Activated CD4-positive, alpha-beta T cell treated with anti-CD3 and anti-CD28 coated beads for 36 hours (primary cell): ENCODE measurements at regions of chr19 and their contacts with region 1.

Region 1: DNA sequence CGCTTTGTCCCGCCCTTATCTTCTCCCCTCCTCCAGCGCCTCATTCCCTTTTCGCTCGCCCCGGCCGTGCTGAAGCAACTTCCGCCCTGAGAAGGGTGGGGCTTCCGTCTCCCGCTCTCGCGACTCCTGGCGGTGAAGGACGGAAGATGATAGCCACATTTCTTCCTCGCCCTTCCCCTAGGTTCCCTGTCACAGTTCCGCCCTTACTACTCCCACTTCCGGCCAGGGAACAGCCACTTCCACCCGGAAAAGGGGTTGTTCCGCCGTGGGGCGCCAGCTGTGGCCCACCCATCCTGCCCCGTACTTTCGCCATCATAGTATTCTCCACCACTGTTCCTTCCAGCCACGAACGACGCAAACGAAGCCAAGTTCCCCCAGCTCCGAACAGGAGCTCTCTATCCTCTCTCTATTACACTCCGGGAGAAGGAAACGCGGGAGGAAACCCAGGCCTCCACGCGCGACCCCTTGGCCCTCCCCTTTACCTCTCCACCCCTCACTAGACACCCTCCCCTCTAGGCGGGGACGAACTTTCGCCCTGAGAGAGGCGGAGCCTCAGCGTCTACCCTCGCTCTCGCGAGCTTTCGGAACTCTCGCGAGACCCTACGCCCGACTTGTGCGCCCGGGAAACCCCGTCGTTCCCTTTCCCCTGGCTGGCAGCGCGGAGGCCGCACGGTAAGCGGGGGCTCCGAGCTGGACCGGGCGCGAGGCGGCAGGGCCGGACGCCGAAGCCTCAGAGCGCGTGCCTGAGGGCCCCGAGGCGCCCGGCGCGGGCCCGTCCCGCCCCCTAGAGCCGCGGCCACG is at the start of gene RPS19:
- DNase-seq: peak; percentile 99
- ATAC-seq: peak; percentile 89
- H3K4me3 Mint-ChIP-seq: peak within 1 kb of the TSS; percentile 86
- H3K27ac Mint-ChIP-seq: peak within 1 kb of the TSS; percentile 98
- H3K4me1 Mint-ChIP-seq: peaks cover 46% of the 10 kb centered on the region
- H3K27me3 Mint-ChIP-seq: no peaks in the 10 kb centered on the region
- total RNA-seq, gene RPS19: 2,342 to 3,204 TPM

Region 2: GRCh38 chr19:40798223-40798996 is 1061.4 kb before region 1 on chr19:
- CTCF ChIA-PET with region 1: no interaction called
- POLR2A ChIA-PET with region 1: no interaction called
- intact Hi-C with region 1: loop called in 1 of 2 experiments (anchors 5 kb)
- DNase-seq: peak; percentile 100
- ATAC-seq: peak; percentile 82
- H3K4me3 Mint-ChIP-seq: peak overlapping the region; percentile 91
- H3K27ac Mint-ChIP-seq: peak overlapping the region; percentile 97
- H3K4me1 Mint-ChIP-seq: peaks cover 49% of the 10 kb centered on the region
- H3K27me3 Mint-ChIP-seq: no peaks in the 10 kb centered on the region

Region 3: GRCh38 chr19:41397086-41398049 is 462.4 kb before region 1 on chr19 and contains the starts of genes BCKDHA and EXOSC5:
- CTCF ChIA-PET with region 1: no interaction called
- POLR2A ChIA-PET with region 1: no interaction called
- intact Hi-C with region 1: loop called in 1 of 2 experiments (anchors 1 kb)
- DNase-seq: peak; percentile 99
- ATAC-seq: peak; percentile 100
- H3K4me3 Mint-ChIP-seq: peak within 1 kb of the TSS; percentile 97
- H3K27ac Mint-ChIP-seq: peak within 1 kb of the TSS; percentile 97
- H3K4me1 Mint-ChIP-seq: peaks cover 31% of the 10 kb centered on the region
- H3K27me3 Mint-ChIP-seq: no peaks in the 10 kb centered on the region
- total RNA-seq, gene BCKDHA: 14.5 to 25.4 TPM
- total RNA-seq, gene EXOSC5: 32.7 to 47.8 TPM

Region 4: GRCh38 chr19:41811036-41811435 is 48.8 kb before region 1 on chr19:
- CTCF ChIA-PET with region 1: no interaction called
- POLR2A ChIA-PET with region 1: no interaction called
- intact Hi-C with region 1: no loop called
- DNase-seq: no peak
- ATAC-seq: no peak
- H3K4me3 Mint-ChIP-seq: no peak overlapping the region
- H3K27ac Mint-ChIP-seq: no peak overlapping the region
- H3K4me1 Mint-ChIP-seq: no peaks in the 10 kb centered on the region
- H3K27me3 Mint-ChIP-seq: peaks cover 6% of the 10 kb centered on the region

Region 5: DNA sequence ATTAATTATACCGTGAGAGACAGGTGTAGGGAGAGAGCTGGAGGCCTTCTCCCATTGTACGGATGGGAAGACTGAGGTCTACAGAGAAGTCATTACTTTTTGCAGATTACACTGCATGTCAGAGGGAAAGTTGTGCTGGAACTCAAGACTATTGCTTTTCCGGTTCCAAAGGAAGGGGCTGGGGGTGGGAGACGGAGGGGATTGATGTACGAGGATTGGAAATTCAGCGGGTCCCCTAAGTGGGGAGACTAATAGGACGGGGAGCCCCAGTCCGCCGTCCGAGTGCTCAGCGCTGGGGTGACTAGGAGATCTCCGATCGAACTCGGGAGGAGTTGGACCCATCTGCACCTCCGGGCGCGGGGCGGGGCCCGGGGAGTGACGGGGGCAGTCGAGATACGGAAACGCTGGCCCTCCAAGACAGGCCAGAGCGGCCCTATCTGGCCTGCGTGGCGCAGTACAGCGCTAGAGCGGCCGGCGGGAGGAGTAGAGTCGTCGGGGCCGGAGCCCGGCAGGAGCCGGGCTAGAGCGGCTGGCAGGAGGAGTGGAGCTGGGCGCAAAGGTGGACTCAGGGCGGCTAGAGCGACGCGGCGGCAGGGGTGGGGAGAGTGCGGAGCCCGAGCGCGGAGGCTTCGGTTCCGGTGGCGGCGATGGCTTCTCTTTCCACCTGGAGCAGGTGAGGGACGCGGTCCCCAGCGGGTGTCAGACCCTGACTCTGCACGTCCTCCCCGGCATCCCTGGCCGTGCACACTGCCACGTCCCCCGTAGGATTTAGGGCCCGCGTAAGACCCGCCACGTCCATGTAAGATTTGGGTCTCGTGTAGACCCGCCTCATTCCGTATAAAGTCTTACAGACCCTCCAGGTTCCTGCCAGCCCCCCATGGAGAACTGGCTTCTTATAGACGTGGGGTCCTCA is 24.3 kb after region 1 on chr19:
- CTCF ChIA-PET with region 1: interaction called, 6 read pairs
- POLR2A ChIA-PET with region 1: interaction called, 17 read pairs
- intact Hi-C with region 1: loop called (anchors 1 to 2 kb)
- DNase-seq: peak; percentile 94
- ATAC-seq: peak; percentile 75
- H3K4me3 Mint-ChIP-seq: peak overlapping the region; percentile 68
- H3K27ac Mint-ChIP-seq: peak overlapping the region; percentile 96
- H3K4me1 Mint-ChIP-seq: peaks cover 54% of the 10 kb centered on the region
- H3K27me3 Mint-ChIP-seq: no peaks in the 10 kb centered on the region

Region 6: DNA sequence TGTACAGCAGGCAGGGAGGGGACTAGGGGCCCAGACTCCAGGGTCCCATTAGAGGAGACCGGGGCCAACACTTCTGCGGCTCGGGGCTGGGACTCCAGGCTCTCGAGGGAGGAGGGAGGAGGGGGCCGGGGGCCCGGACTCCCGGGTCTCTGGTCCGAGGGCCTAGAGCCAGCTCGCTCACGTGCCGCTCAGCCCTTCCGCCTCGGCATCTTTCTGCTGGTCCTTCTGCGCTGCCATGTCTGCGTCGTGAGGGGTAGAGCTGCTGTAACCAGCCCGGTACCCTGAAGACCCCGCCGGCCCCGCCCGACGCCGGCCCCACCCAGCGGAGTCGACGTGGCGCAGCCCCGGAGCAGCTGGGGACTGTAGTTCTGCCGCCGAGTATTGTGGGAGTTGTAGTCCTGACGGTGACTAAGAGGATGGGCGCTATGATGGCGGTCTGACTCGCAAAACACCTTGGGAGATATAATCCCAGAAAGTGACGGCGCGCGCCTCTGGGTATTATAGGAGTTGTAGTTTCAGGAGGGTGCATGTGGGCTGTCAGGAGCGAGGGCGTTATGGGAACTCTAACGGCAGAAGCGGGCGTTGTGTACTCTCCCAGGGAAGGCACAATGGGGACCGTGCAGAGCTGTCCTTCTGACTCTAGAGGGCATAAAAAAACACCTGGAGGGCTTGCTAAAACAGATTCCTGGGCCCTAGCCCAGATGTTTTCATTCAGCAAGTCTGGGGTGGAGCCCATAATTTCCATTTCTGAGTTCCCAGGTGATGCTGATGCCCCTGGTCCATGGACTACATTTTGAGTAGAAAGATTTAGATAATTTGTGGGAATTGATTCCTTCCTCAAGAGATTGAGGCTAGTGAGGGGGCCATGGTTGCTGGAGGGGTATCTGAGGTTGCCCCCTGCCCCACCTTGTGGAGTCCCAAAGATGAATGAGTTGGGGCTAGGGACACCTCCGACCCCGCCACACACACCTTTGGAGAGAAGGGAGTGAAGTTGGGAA is 99.5 kb after region 1 on chr19 and contains the start of gene RABAC1:
- CTCF ChIA-PET with region 1: interaction called, 14 read pairs
- POLR2A ChIA-PET with region 1: interaction called, 4 read pairs
- intact Hi-C with region 1: loop called (anchors 1 kb)
- DNase-seq: peak; percentile 94
- ATAC-seq: peak; percentile 88
- H3K4me3 Mint-ChIP-seq: peak within 1 kb of the TSS; percentile 81
- H3K27ac Mint-ChIP-seq: peak within 1 kb of the TSS; percentile 87
- H3K4me1 Mint-ChIP-seq: peaks cover 16% of the 10 kb centered on the region
- H3K27me3 Mint-ChIP-seq: no peaks in the 10 kb centered on the region
- total RNA-seq, gene RABAC1: 35.3 to 49.7 TPM

Region 7: GRCh38 chr19:42048992-42049391 is 189.2 kb after region 1 on chr19:
- CTCF ChIA-PET with region 1: no interaction called
- POLR2A ChIA-PET with region 1: no interaction called
- intact Hi-C with region 1: no loop called
- DNase-seq: peak; percentile 34
- ATAC-seq: peak; percentile 9
- H3K4me3 Mint-ChIP-seq: no peak overlapping the region
- H3K27ac Mint-ChIP-seq: peak overlapping the region; percentile 35
- H3K4me1 Mint-ChIP-seq: peaks cover 21% of the 10 kb centered on the region
- H3K27me3 Mint-ChIP-seq: peaks cover 2% of the 10 kb centered on the region

Region 8: GRCh38 chr19:42268704-42269477 is 409.1 kb after region 1 on chr19 and contains the start of gene CIC:
- CTCF ChIA-PET with region 1: no interaction called
- POLR2A ChIA-PET with region 1: no interaction called
- intact Hi-C with region 1: loop called in 1 of 2 experiments (anchors 1 kb)
- DNase-seq: peak; percentile 100
- ATAC-seq: peak; percentile 87
- H3K4me3 Mint-ChIP-seq: no peak within 1 kb of the TSS
- H3K27ac Mint-ChIP-seq: peak within 1 kb of the TSS; percentile 97
- H3K4me1 Mint-ChIP-seq: peaks cover 24% of the 10 kb centered on the region
- H3K27me3 Mint-ChIP-seq: no peaks in the 10 kb centered on the region
- total RNA-seq, gene CIC: 62.8 to 66.3 TPM